H1 (cell line): ENCODE measurements at regions of chr2 and their contacts with region 1.

Region 1: GRCh38 chr2:11681722-11682589 is 12.0 kb upstream of the NTSR2 start:
- DNase-seq: peak in 1 of 2 experiments; percentile 94
- H3K4me3 ChIP-seq: no peak overlapping the region; a peak in 2 of 8 replicates
- H3K27ac ChIP-seq: no peak overlapping the region
- H3K4me1 ChIP-seq: peaks cover 3 to 13% (median 10%) of the 10 kb centered on the region in 4 experiments; a peak in 6 of 7 replicates
- H3K27me3 ChIP-seq: no peaks in the 10 kb centered on the region
- CTCF ChIP-seq: peak; percentile 86 to 96 (median 95)
- EP300 ChIP-seq: no peak
- POLR2A ChIP-seq: no peak
- RAD21 ChIP-seq: peak; percentile 77 to 88

Region 2: GRCh38 chr2:11524455-11524854 is 157.5 kb before region 1 on chr2:
- CTCF ChIA-PET with region 1: no interaction called
- POLR2A ChIA-PET with region 1: no interaction called
- DNase-seq: no peak
- H3K4me3 ChIP-seq: no peak overlapping the region
- H3K27ac ChIP-seq: no peak overlapping the region
- H3K4me1 ChIP-seq: peaks cover 0 to 7% (median 3%) of the 10 kb centered on the region in 4 experiments; a peak in 1 of 7 replicates
- H3K27me3 ChIP-seq: no peaks in the 10 kb centered on the region
- CTCF ChIP-seq: no peak
- EP300 ChIP-seq: no peak
- POLR2A ChIP-seq: no peak
- RAD21 ChIP-seq: no peak

Region 3: GRCh38 chr2:11642974-11643373 is 39.0 kb before region 1 on chr2:
- CTCF ChIA-PET with region 1: interaction called, 14 read pairs
- POLR2A ChIA-PET with region 1: no interaction called
- DNase-seq: no peak
- H3K4me3 ChIP-seq: no peak overlapping the region
- H3K27ac ChIP-seq: no peak overlapping the region
- H3K4me1 ChIP-seq: no peaks in the 10 kb centered on the region
- H3K27me3 ChIP-seq: no peaks in the 10 kb centered on the region
- CTCF ChIP-seq: peak; percentile 10 to 44 (median 26); a peak in 3 of 4 replicates
- EP300 ChIP-seq: no peak
- POLR2A ChIP-seq: no peak
- RAD21 ChIP-seq: peak; percentile 14 to 22; a peak in 1 of 4 replicates

Region 4: DNA sequence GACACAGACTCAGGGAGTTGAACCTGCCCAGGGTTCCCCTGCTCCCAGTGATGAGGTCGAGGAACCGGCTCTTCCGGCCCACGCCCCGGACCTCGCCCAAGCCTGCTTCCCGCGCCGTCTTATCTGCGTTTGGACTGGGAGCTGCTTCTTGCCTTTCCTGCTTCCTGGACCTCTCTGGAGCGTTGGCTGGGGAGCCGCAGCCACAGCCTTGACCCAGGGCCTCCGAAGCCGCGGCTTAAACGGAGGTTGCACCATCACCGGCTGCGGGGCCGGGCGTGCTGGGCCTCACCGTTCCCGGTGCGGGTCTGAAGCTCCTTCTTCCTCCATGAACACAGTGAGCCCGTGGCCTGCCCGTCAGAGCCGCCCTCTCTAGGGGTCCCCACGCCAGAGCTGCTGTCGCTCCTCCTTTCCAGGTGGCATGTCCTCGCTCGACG is 25.3 kb before region 1 on chr2:
- CTCF ChIA-PET with region 1: interaction called, 37 read pairs
- POLR2A ChIA-PET with region 1: no interaction called
- DNase-seq: no peak
- H3K4me3 ChIP-seq: no peak overlapping the region
- H3K27ac ChIP-seq: no peak overlapping the region
- H3K4me1 ChIP-seq: no peaks in the 10 kb centered on the region
- H3K27me3 ChIP-seq: no peaks in the 10 kb centered on the region
- CTCF ChIP-seq: no peak
- EP300 ChIP-seq: no peak
- POLR2A ChIP-seq: no peak
- RAD21 ChIP-seq: no peak

Region 5: DNA sequence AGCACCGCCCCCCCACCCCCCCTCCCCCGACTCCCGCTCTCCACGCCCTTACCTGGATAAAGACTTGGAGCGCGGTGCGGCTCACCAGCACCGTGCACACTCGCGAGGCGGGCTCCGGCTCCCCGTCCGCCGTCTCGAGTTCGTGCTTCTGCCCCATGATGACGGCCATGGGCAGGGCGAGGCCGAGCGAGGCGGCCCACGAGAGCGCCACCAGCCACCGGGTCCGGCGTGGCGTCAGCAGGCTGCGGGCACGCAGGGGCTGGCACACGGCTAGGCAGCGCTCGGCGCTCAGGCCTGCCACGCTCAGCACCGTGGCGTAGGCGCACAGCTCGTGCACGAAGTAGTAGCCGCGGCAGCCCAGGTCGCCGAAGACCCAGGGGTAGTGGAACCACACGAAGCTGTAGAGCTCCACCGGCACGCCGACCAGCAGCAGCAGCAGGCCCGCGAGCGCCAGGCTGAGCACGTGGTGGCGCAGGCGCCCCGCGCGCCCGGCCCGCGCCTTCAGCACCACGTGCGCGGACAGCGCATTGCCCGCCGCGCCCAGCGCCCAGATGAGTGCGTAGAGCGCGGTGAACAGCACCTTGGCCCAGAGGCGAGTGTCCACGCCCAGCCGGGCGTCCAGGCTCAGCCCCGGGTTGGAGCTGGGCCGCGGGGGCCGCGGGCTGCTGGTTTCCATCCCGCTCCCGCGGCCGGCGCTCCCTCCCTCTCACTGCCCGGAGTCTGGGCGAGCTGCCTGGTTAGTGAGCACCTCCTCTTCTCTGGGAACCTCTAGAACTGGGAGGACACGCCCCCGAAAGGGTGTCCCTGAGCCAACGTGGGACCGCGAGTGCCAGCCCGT is 12.3 kb before region 1 on chr2 and contains the start of gene NTSR2:
- CTCF ChIA-PET with region 1: interaction called, 76 read pairs
- POLR2A ChIA-PET with region 1: interaction called, 3 read pairs
- DNase-seq: peak; percentile 65 to 89
- H3K4me3 ChIP-seq: peak within 1 kb of the TSS in 3 of 4 experiments; percentile 17 to 53 (median 28); a peak in 3 of 8 replicates
- H3K27ac ChIP-seq: no peak within 1 kb of the TSS
- H3K4me1 ChIP-seq: peaks cover 0 to 7% (median 3%) of the 10 kb centered on the region in 4 experiments; a peak in 1 of 7 replicates
- H3K27me3 ChIP-seq: peaks cover 8 to 28% (median 23%) of the 10 kb centered on the region in 4 experiments
- CTCF ChIP-seq: peak in 2 of 3 experiments; percentile 4 to 18; a peak in 2 of 4 replicates
- EP300 ChIP-seq: no peak
- POLR2A ChIP-seq: no peak
- RAD21 ChIP-seq: peak; percentile 15 to 34; a peak in 3 of 4 replicates
- total RNA-seq, gene NTSR2: not detected in 2 replicates

Region 6: DNA sequence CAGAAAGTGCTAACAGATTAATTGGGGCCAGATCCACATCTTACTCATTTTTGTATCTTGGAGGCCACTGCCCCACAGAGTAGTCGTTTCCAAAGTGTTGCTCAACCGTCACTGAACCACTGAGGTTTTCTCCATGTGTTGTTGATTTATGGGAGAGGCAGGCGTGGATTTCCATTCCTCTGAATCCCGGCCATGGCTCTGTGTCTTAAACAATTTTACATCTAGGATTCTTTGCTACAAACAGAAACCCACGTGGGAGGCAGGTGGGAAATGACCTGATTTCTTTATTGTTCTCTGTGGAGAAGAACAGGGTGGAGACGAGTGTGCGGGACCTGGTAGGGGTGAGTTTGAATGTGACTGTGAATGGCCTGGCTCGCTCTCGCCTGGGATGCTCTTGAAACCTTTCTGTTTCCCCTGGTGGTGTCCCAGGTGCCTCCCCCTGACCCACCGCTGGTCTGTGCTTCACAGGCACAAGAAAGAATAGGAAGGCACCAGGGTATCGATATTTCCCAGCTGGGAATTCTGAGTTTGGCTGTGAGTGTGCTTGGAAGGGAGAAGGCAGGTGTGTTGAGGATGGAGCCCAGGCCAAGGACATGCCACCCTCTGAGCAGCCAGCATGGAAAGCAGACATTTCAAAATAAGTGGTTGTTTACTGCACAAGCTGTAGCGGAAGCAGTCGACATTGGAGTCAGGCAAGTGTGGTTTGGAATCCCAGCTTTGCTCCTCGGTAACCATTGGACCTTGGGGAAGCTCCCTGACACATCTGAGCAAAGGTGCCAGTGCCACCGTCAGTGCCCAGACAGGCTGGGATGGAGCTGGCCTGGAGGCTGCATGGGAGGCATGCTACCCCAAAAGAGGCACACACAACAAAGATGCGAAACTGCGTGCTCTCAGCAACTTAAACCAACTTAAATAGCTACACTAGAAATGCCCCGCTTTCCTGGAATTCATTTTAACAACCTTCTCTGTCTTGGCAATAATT is 114.5 kb after region 1 on chr2:
- CTCF ChIA-PET with region 1: no interaction called
- POLR2A ChIA-PET with region 1: no interaction called
- DNase-seq: no peak
- H3K4me3 ChIP-seq: no peak overlapping the region
- H3K27ac ChIP-seq: no peak overlapping the region
- H3K4me1 ChIP-seq: no peaks in the 10 kb centered on the region
- H3K27me3 ChIP-seq: no peaks in the 10 kb centered on the region
- CTCF ChIP-seq: no peak
- EP300 ChIP-seq: no peak
- POLR2A ChIP-seq: no peak
- RAD21 ChIP-seq: no peak